HCT116 (cell line): ENCODE measurements at regions of chr11 and their contacts with region 1.

Region 1: GRCh38 chr11:6862961-6863360 is at the start of gene OR10A2:
- DNase-seq: no peak
- ATAC-seq: 0 out of 2 replicates have a peak, but pooled peaks have one; percentile 30
- H3K4me3 ChIP-seq: no peak within 1 kb of the TSS
- H3K27ac ChIP-seq: no peak within 1 kb of the TSS
- H3K4me1 ChIP-seq: no peaks in the 10 kb centered on the region
- H3K27me3 ChIP-seq: no peaks in the 10 kb centered on the region
- CTCF ChIP-seq: no peak
- POLR2A ChIP-seq: no peak
- RAD21 ChIP-seq: no peak
- total RNA-seq, gene OR10A2: not detected

Region 2: GRCh38 chr11:5059391-5059790 is 1803.6 kb before region 1 on chr11 and contains the start of gene OR52E2:
- CTCF ChIA-PET with region 1: no interaction called
- POLR2A ChIA-PET with region 1: no interaction called
- RAD21 ChIA-PET with region 1: no interaction called
- intact Hi-C with region 1: loop called (anchors 5 kb)
- DNase-seq: no peak
- ATAC-seq: no peak
- H3K4me3 ChIP-seq: no peak within 1 kb of the TSS
- H3K27ac ChIP-seq: no peak within 1 kb of the TSS
- H3K4me1 ChIP-seq: no peaks in the 10 kb centered on the region
- H3K27me3 ChIP-seq: peaks cover 58% of the 10 kb centered on the region
- CTCF ChIP-seq: no peak
- POLR2A ChIP-seq: no peak
- RAD21 ChIP-seq: no peak
- total RNA-seq, gene OR52E2: not detected